ENCODE measurements at regions of chr2 and their contacts with region 1.

Region 1: DNA sequence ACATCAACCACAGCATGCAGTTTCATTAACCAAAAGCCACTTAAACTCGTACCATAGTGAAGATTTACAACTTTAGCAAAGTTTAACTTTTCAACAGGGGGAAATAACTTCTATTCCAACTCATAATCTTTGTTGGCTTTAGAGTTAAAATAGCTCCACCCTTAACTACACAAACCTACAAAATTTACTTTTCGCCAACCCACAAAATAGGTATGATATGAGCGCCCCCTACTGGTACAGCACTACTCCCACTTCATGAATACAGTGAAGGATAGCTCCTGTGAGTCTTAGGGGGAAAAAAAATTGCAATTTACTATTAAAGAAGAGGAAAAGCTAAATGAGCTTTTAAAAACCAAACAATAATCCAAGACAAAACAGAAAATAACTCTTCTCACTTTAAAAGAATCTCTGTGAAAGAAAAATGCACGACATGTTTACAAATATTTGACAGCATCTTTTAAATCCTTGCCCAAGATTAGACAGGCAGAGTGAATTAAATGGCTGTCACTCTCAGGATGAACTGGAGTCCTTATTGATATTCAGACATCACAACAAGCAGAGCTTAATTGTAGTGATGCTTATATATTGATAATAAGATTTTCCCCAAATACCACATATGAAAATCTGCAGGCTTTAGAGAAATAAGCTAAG is 32.2 kb downstream of the TMEFF2 start:
- DNase-seq: peak; percentile 72

Region 2: GRCh38 chr2:191811807-191812602 is 350.5 kb before region 1 on chr2:
- in situ Hi-C with region 1: loop called (anchors 25 kb)
- DNase-seq: peak; percentile 71

Measured in ACHN (cell line).